ENCODE measurements at regions of chr7 and their contacts with region 1.

Region 1: GRCh38 chr7:141014524-141015395 is at the start of gene MRPS33:
- DNase-seq: peak; percentile 97
- H3K4me3 Mint-ChIP-seq: peak within 1 kb of the TSS; percentile 95
- H3K27ac Mint-ChIP-seq: peak within 1 kb of the TSS; percentile 98
- H3K4me1 Mint-ChIP-seq: peaks cover 28% of the 10 kb centered on the region
- H3K27me3 Mint-ChIP-seq: peaks cover 3% of the 10 kb centered on the region
- total RNA-seq, gene MRPS33: 116 to 120 TPM

Region 2: DNA sequence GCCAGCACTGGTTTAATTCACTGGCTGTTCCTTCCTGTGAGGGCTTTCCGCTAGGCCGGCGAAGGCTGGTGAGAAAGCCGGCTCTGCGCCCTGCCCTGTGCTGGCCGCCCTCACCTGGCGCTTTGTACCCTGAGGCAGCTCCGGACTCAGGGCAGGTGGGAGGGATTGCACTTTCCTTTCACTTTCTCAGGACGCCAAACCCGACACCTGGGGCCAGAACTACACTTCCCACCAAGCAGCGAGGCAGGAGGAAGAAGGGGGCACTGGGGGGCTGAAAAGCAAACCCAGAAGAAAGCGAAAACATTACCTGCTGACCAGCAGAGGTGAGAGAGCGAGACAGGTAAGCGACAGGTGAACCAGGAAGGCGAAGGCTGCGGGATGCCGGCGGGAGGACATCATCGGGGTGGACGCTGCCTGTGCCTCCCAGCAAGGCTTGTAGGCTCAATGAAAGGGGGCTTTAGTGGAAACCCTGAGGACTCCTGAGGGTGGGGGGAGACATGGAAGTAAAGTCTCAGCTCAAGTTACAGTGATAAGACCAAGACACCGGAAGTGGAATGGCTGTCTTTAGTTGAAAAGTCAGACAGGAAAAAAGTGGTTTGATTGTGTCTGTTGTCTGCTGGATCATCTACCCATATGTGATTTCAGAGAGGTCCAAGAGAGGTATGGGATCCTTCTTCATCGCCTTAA is 610.7 kb before region 1 on chr7 and contains the start of gene RAB19:
- CTCF ChIA-PET with region 1: no interaction called
- intact Hi-C with region 1: loop called (anchors 5 kb)
- DNase-seq: peak; percentile 67
- H3K4me3 Mint-ChIP-seq: peak within 1 kb of the TSS; percentile 82
- H3K27ac Mint-ChIP-seq: peak within 1 kb of the TSS; percentile 86
- H3K4me1 Mint-ChIP-seq: peaks cover 27% of the 10 kb centered on the region
- H3K27me3 Mint-ChIP-seq: no peaks in the 10 kb centered on the region
- total RNA-seq, gene RAB19: 4.6 to 5.2 TPM

Region 3: DNA sequence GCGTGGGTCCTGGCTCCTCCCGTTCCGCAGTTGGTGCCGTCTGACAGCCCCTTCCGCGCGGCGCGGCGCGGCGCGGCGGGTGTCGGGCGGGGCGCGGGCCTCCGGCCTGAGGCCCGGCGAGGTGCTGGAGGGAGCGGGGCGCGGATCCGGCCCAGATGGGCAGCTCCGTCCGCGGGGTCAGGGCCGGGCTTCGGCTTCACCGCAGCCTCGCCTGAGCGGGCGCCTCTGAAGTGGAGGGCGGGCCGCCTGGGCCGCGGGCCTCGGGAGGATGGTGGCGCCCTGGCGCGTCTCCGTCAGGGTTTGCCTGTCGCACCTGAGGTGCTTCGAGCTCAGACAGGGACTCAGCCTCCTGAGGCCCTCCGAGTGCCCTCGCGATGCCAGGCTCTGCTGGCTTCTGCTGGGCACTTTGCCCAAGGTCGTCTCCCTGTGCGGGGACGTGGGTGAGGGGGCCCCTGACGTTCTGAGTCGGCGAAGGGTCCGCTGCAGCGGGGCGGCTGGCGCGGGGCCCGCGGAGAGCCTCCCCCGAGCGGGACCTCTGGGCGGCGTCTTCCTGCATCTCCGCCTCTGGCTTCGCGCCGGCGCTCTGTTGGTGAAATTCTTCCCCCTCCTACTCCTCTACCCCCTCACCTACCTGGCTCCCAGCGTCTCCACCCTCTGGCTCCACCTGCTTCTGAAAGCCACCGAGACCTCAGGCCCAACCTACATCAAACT is 341.5 kb before region 1 on chr7:
- CTCF ChIA-PET with region 1: interaction called, 4 read pairs
- intact Hi-C with region 1: loop called (anchors 1 kb)
- DNase-seq: peak; percentile 54
- H3K4me3 Mint-ChIP-seq: peak overlapping the region; percentile 83
- H3K27ac Mint-ChIP-seq: peak overlapping the region; percentile 66
- H3K4me1 Mint-ChIP-seq: peaks cover 39% of the 10 kb centered on the region
- H3K27me3 Mint-ChIP-seq: no peaks in the 10 kb centered on the region

Region 4: DNA sequence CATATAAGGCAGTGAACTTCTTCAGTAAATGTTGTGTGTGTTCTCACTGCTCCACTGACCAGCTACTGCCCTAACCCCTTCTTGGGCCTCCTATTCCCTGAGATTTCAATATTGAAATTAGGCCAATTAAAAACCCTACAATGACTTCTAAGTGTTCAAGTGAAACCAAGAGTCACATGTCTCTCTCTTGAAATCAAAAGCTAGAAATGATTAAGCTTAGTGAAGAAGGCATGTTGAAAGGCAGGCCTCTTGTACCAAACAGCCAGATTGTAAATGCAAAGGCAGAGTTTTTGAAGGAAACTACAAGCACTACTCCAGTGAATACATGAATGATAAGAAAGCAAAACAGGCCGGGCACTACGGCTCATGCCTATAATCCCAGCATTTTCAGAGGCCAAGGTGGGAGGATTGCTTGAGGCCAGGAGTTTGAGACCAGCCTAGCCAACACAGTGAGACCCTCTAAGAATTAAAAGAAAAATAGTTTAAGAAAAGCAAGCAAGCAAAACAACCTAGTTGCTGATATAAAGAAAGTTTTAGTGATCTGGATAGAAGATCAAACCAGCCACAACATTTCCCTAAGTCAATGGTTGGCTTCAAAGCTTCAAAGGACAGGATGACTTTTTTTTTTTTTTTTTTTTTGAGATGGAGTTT is 112.3 kb before region 1 on chr7:
- CTCF ChIA-PET with region 1: no interaction called
- intact Hi-C with region 1: loop called (anchors 1 kb)
- DNase-seq: no peak
- H3K4me3 Mint-ChIP-seq: peak overlapping the region; percentile 33
- H3K27ac Mint-ChIP-seq: peak overlapping the region; percentile 88
- H3K4me1 Mint-ChIP-seq: peaks cover 66% of the 10 kb centered on the region
- H3K27me3 Mint-ChIP-seq: no peaks in the 10 kb centered on the region

Region 5: GRCh38 chr7:141533149-141533949 is 518.6 kb after region 1 on chr7:
- CTCF ChIA-PET with region 1: interaction called, 3 read pairs
- intact Hi-C with region 1: loop called (anchors 2 kb)
- DNase-seq: peak; percentile 76
- H3K4me3 Mint-ChIP-seq: no peak overlapping the region
- H3K27ac Mint-ChIP-seq: no peak overlapping the region
- H3K4me1 Mint-ChIP-seq: peaks cover 2% of the 10 kb centered on the region
- H3K27me3 Mint-ChIP-seq: peaks cover 35% of the 10 kb centered on the region

Measured in activated naive CD4-positive, alpha-beta T cell treated with anti-CD3 and anti-CD28 coated beads for 36 hours (primary cell).